ENCODE measurements at regions of chr13 and their contacts with region 1.

Region 1: GRCh38 chr13:34076943-34077703 is 259.2 kb downstream of the RFC3 start:
- DNase-seq: no peak
- ATAC-seq: peak; percentile 26 to 44

Region 2: GRCh38 chr13:33483471-33483870 is 593.7 kb before region 1 on chr13:
- intact Hi-C with region 1: no loop called
- DNase-seq: no peak
- ATAC-seq: no peak

Region 3: DNA sequence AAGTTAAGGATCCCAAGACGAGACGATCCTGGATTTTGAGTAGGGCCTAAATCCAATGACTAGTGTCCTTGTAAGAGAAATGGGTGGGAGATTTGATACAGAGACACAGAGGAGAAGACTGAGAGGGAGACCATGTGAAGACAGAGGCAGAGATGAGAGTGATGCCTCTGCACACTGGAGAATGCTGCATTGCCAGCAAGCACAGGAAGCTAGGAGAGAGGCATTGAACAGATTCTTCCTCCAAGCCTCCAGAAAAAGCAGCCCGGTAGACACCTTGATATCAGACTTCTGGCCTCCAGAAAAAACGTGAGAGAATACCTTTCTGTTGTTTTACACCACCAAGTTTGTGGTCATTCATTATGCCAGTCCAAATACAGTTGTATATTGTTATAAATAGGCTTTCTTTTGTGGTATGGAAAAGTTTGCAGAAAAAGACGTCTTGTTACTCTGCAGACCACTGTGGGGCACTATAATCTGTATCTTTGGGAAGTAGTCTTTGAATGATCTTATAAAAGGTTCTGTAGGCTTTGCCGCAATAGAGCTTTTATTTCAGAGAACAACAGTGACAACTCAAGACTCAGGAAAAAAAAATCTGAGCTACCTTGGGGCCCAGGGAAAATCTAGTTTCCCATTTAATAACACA is 277.1 kb before region 1 on chr13:
- intact Hi-C with region 1: loop called in 1 of 2 experiments (anchors 5 kb)
- DNase-seq: no peak
- ATAC-seq: peak in 1 of 2 donors; percentile 45

Region 4: GRCh38 chr13:33931397-33932311 is 145.5 kb before region 1 on chr13:
- intact Hi-C with region 1: loop called in 1 of 2 experiments (anchors 1 kb)
- DNase-seq: no peak
- ATAC-seq: peak; percentile 74 to 81

Region 5: GRCh38 chr13:35164324-35164932 is 1087.3 kb after region 1 on chr13:
- intact Hi-C with region 1: loop called in 1 of 2 experiments (anchors 5 kb)
- DNase-seq: no peak
- ATAC-seq: peak; percentile 37 to 55

Measured in left cardiac atrium (tissue), 4 donors.